ENCODE measurements at regions of chr12 and their contacts with region 1.

Region 1: GRCh38 chr12:132687208-132688164 is at the starts of genes POLE and PXMP2:
- DNase-seq: peak; percentile 96
- H3K4me3 Mint-ChIP-seq: peak within 1 kb of the TSS; percentile 79
- H3K27ac Mint-ChIP-seq: peak within 1 kb of the TSS; percentile 66
- H3K4me1 Mint-ChIP-seq: peaks cover 23% of the 10 kb centered on the region
- H3K27me3 Mint-ChIP-seq: no peaks in the 10 kb centered on the region
- total RNA-seq, gene POLE: 118 to 121 TPM
- total RNA-seq, gene PXMP2: 11.3 to 12.8 TPM

Region 2: GRCh38 chr12:132489602-132490239 is 197.8 kb before region 1 on chr12 and contains the start of gene FBRSL1:
- CTCF ChIA-PET with region 1: no interaction called
- intact Hi-C with region 1: no loop called
- DNase-seq: peak; percentile 93
- H3K4me3 Mint-ChIP-seq: peak within 1 kb of the TSS; percentile 79
- H3K27ac Mint-ChIP-seq: peak within 1 kb of the TSS; percentile 73
- H3K4me1 Mint-ChIP-seq: peaks cover 57% of the 10 kb centered on the region
- H3K27me3 Mint-ChIP-seq: no peaks in the 10 kb centered on the region
- total RNA-seq, gene FBRSL1: 35.1 to 36.3 TPM

Region 3: GRCh38 chr12:132834181-132834711 is 146.8 kb after region 1 on chr12:
- CTCF ChIA-PET with region 1: no interaction called
- intact Hi-C with region 1: loop called (anchors 2 kb)
- DNase-seq: peak; percentile 55
- H3K4me3 Mint-ChIP-seq: peak overlapping the region; percentile 13
- H3K27ac Mint-ChIP-seq: peak overlapping the region; percentile 85
- H3K4me1 Mint-ChIP-seq: peaks cover 38% of the 10 kb centered on the region
- H3K27me3 Mint-ChIP-seq: no peaks in the 10 kb centered on the region

Region 4: GRCh38 chr12:132887513-132888351 is 200.2 kb after region 1 on chr12 and contains the start of gene CHFR:
- CTCF ChIA-PET with region 1: interaction called, 4 read pairs
- intact Hi-C with region 1: loop called (anchors 1 kb)
- DNase-seq: peak; percentile 97
- H3K4me3 Mint-ChIP-seq: peak within 1 kb of the TSS; percentile 98
- H3K27ac Mint-ChIP-seq: peak within 1 kb of the TSS; percentile 99
- H3K4me1 Mint-ChIP-seq: peaks cover 32% of the 10 kb centered on the region
- H3K27me3 Mint-ChIP-seq: no peaks in the 10 kb centered on the region
- total RNA-seq, gene CHFR: 27.2 to 32.8 TPM

Region 5: GRCh38 chr12:132921685-132922084 is 234.2 kb after region 1 on chr12:
- CTCF ChIA-PET with region 1: no interaction called
- intact Hi-C with region 1: no loop called
- DNase-seq: no peak
- H3K4me3 Mint-ChIP-seq: no peak overlapping the region
- H3K27ac Mint-ChIP-seq: no peak overlapping the region
- H3K4me1 Mint-ChIP-seq: no peaks in the 10 kb centered on the region
- H3K27me3 Mint-ChIP-seq: no peaks in the 10 kb centered on the region